PC-9 (cell line): ENCODE measurements at regions of chr18 and their contacts with region 1.

Region 1: GRCh38 chr18:34867520-34867919 is 157.4 kb downstream of the DTNA start:
- DNase-seq: no peak
- H3K4me3 ChIP-seq: no peak overlapping the region
- H3K27ac ChIP-seq: no peak overlapping the region
- H3K4me1 ChIP-seq: no peaks in the 10 kb centered on the region
- H3K27me3 ChIP-seq: no peaks in the 10 kb centered on the region
- CTCF ChIP-seq: no peak

Region 2: GRCh38 chr18:34314847-34315246 is 552.7 kb before region 1 on chr18:
- CTCF ChIA-PET with region 1: no interaction called
- POLR2A ChIA-PET with region 1: no interaction called
- intact Hi-C with region 1: no loop called
- DNase-seq: no peak
- H3K4me3 ChIP-seq: no peak overlapping the region
- H3K27ac ChIP-seq: no peak overlapping the region
- H3K4me1 ChIP-seq: no peaks in the 10 kb centered on the region
- H3K27me3 ChIP-seq: no peaks in the 10 kb centered on the region
- CTCF ChIP-seq: no peak

Region 3: GRCh38 chr18:35005963-35006577 is 138.6 kb after region 1 on chr18:
- CTCF ChIA-PET with region 1: no interaction called
- POLR2A ChIA-PET with region 1: no interaction called
- intact Hi-C with region 1: loop called (anchors 10 kb)
- DNase-seq: peak; percentile 6 to 32
- H3K4me3 ChIP-seq: no peak overlapping the region
- H3K27ac ChIP-seq: no peak overlapping the region
- H3K4me1 ChIP-seq: no peaks in the 10 kb centered on the region
- H3K27me3 ChIP-seq: no peaks in the 10 kb centered on the region
- CTCF ChIP-seq: peak; percentile 61